ENCODE measurements at regions of chr3 and their contacts with region 1.

Region 1: GRCh38 chr3:61864886-61865285 is 303.5 kb downstream of the PTPRG start:
- DNase-seq: no peak
- ATAC-seq: no peak
- H3K4me3 ChIP-seq: no peak overlapping the region
- H3K27ac ChIP-seq: no peak overlapping the region
- H3K4me1 ChIP-seq: no peaks in the 10 kb centered on the region
- H3K27me3 ChIP-seq: no peaks in the 10 kb centered on the region
- CTCF ChIP-seq: no peak

Region 2: GRCh38 chr3:61574854-61575253 is 290.0 kb before region 1 on chr3:
- CTCF ChIA-PET with region 1: no interaction called
- POLR2A ChIA-PET with region 1: no interaction called
- in situ Hi-C with region 1: no loop called
- intact Hi-C with region 1: no loop called
- DNase-seq: no peak
- ATAC-seq: no peak
- H3K4me3 ChIP-seq: no peak overlapping the region
- H3K27ac ChIP-seq: no peak overlapping the region
- H3K4me1 ChIP-seq: no peaks in the 10 kb centered on the region
- H3K27me3 ChIP-seq: no peaks in the 10 kb centered on the region
- CTCF ChIP-seq: no peak

Region 3: GRCh38 chr3:61807865-61808276 is 57.0 kb before region 1 on chr3:
- CTCF ChIA-PET with region 1: no interaction called
- POLR2A ChIA-PET with region 1: no interaction called
- in situ Hi-C with region 1: no loop called
- intact Hi-C with region 1: no loop called
- DNase-seq: no peak
- ATAC-seq: no peak
- H3K4me3 ChIP-seq: no peak overlapping the region
- H3K27ac ChIP-seq: no peak overlapping the region
- H3K4me1 ChIP-seq: no peaks in the 10 kb centered on the region
- H3K27me3 ChIP-seq: no peaks in the 10 kb centered on the region
- CTCF ChIP-seq: no peak

Region 4: DNA sequence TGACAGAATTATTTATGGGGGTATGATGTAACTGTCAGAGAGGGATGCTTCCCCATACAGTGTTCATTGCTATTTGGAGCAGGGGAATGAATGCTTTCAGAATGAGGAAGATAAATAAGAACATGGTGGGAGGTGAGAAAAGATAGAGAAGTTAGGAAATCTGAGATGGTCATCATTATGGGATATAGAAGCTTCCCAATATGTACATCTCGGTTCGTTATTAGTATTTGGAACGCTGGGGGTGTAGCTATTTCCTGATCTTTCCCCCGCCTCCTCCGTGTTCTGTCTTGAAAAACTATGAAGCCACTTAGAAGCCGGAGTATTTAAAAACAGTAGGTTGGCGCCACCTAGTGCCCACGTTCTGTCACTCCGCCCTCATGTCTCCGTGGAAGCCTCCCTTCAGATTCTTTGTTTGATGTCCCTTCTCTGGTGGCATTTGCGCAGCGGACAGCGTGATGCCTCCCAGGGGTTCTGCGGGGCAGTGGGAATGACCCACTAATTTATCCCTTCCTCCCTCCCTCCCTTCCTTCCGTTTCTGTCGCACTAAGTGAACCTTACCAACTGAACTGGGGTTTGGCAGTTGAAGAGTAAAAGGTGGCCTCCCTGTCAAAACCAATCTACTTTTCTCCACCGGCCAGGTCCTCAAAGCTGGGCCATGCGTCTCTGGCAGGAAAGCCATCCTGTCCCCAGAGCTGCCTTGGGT is 323.9 kb after region 1 on chr3:
- CTCF ChIA-PET with region 1: no interaction called
- POLR2A ChIA-PET with region 1: interaction called, 7 read pairs
- in situ Hi-C with region 1: no loop called
- intact Hi-C with region 1: loop called (anchors 10 kb)
- DNase-seq: peak; percentile 33
- ATAC-seq: peak; percentile 85
- H3K4me3 ChIP-seq: no peak overlapping the region
- H3K27ac ChIP-seq: no peak overlapping the region
- H3K4me1 ChIP-seq: no peaks in the 10 kb centered on the region
- H3K27me3 ChIP-seq: no peaks in the 10 kb centered on the region
- CTCF ChIP-seq: peak; percentile 79